GM12878 (cell line): ENCODE measurements at regions of chr10 and their contacts with region 1.

Region 1: GRCh38 chr10:74151056-74151878 is at the start of gene ADK:
- DNase-seq: no peak
- ATAC-seq: peak; percentile 92
- H3K4me3 ChIP-seq: peak within 1 kb of the TSS; percentile 97
- H3K27ac ChIP-seq: peak within 1 kb of the TSS; percentile 99
- H3K4me1 ChIP-seq: peaks cover 11% of the 10 kb centered on the region; the same call in 1 of the 2 replicates
- H3K27me3 ChIP-seq: no peaks in the 10 kb centered on the region
- CTCF ChIP-seq: peak; percentile 20 to 38 (median 29); a peak in 4 of 6 replicates
- EP300 ChIP-seq: no peak
- POLR2A ChIP-seq: peak; percentile 84
- RAD21 ChIP-seq: peak; percentile 21; the same call in 1 of the 2 replicates
- polyA plus RNA-seq, gene ADK: 107 to 117 TPM

Region 2: GRCh38 chr10:74165530-74165901 is 14.2 kb after region 1 on chr10:
- CTCF ChIA-PET with region 1: interaction called, 51 read pairs
- POLR2A ChIA-PET with region 1: interaction called, 44 read pairs
- RAD21 ChIA-PET with region 1: interaction called, 58 read pairs
- SMC1A ChIA-PET with region 1: interaction called, 78 read pairs
- in situ Hi-C with region 1: no loop called
- intact Hi-C with region 1: no loop called
- DNase-seq: no peak
- ATAC-seq: peak; percentile 26
- H3K4me3 ChIP-seq: 0 out of 2 replicates have a peak overlapping the region, but pooled peaks have one; percentile 7
- H3K27ac ChIP-seq: peak overlapping the region; percentile 66; the same call in 1 of the 2 replicates
- H3K4me1 ChIP-seq: peaks cover 53% of the 10 kb centered on the region
- H3K27me3 ChIP-seq: no peaks in the 10 kb centered on the region
- CTCF ChIP-seq: no peak
- EP300 ChIP-seq: no peak
- POLR2A ChIP-seq: no peak
- RAD21 ChIP-seq: no peak

Region 3: DNA sequence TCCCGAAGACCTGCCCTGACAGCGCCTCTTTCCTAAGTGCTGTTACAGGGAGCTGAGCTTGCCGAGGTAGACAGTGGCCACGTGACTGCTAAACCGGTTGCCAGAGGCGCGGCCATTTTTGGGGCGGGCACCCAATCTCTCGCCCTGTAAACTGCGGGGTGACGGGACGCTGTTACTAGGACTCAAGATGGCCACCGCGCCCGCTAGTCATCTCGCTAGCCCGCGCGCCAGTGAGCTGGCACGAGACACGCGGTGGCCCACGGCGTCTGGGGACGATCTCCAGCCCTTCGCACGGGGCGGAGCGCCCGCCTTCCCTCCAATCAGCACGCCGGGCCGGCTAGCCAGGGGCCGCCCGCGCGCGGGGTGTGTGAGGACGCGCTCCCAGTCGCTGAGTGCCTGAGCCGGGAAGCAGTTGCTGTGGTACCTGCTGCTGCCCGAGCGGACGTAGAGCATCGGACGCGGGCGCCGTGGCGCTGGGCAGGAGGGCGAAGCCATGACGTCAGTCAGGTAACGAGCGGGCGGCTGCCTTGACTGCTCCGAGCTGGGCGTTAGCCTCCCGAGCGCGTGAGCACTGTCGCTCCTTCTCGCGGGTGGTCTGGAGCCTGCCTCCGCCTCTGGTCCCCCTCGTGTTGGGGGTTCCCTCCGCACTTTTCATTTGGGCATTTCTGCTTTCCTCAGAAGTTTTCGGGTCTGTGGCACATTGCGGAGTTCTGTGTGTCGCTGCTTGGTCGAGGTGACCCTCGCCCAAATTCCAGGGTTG is 25.3 kb after region 1 on chr10:
- CTCF ChIA-PET with region 1: interaction called, 4 read pairs
- POLR2A ChIA-PET with region 1: interaction called, 12 read pairs
- RAD21 ChIA-PET with region 1: interaction called, 3 read pairs
- SMC1A ChIA-PET with region 1: interaction called, 12 read pairs
- in situ Hi-C with region 1: no loop called
- intact Hi-C with region 1: no loop called
- DNase-seq: peak; percentile 84
- ATAC-seq: peak; percentile 95
- H3K4me3 ChIP-seq: peak overlapping the region; percentile 88
- H3K27ac ChIP-seq: peak overlapping the region; percentile 74
- H3K4me1 ChIP-seq: peaks cover 22% of the 10 kb centered on the region
- H3K27me3 ChIP-seq: no peaks in the 10 kb centered on the region
- CTCF ChIP-seq: no peak
- EP300 ChIP-seq: peak in 1 of 2 experiments; percentile 22; a peak in 2 of 4 replicates
- POLR2A ChIP-seq: peak; percentile 96
- RAD21 ChIP-seq: no peak

Region 4: DNA sequence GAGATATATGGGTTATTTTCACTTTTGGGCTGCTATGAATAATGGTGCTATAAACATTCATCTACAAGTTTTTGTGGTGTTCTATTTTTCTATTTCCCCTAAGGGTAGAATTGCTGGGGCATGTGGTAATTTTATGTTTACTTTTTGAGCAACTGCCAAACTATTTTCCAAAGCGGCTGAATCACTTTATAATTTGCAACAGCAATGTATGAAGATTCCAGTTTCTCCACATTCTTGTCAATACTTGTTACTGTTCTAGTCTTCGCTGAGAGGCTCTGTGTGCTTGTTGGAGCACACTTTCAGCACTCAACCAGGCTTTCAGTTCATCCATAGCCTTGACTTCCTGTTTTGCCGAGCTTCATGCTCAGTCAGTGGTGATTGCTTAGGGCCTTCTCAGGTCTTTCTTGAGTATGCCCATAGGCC is 38.7 kb after region 1 on chr10:
- CTCF ChIA-PET with region 1: interaction called, 9 read pairs
- POLR2A ChIA-PET with region 1: interaction called, 12 read pairs
- RAD21 ChIA-PET with region 1: interaction called, 12 read pairs
- SMC1A ChIA-PET with region 1: interaction called, 16 read pairs
- in situ Hi-C with region 1: no loop called
- intact Hi-C with region 1: no loop called
- DNase-seq: peak; percentile 49
- ATAC-seq: peak; percentile 94
- H3K4me3 ChIP-seq: peak overlapping the region; percentile 64
- H3K27ac ChIP-seq: peak overlapping the region; percentile 76
- H3K4me1 ChIP-seq: no peaks in the 10 kb centered on the region; the same call in 1 of the 2 replicates
- H3K27me3 ChIP-seq: no peaks in the 10 kb centered on the region
- CTCF ChIP-seq: no peak
- EP300 ChIP-seq: no peak
- POLR2A ChIP-seq: peak; percentile 44; the same call in 1 of the 2 replicates
- RAD21 ChIP-seq: no peak

Region 5: GRCh38 chr10:74206746-74207145 is 55.5 kb after region 1 on chr10:
- CTCF ChIA-PET with region 1: interaction called, 29 read pairs
- POLR2A ChIA-PET with region 1: interaction called, 11 read pairs
- RAD21 ChIA-PET with region 1: interaction called, 7 read pairs
- SMC1A ChIA-PET with region 1: interaction called, 39 read pairs
- in situ Hi-C with region 1: no loop called
- intact Hi-C with region 1: no loop called
- DNase-seq: no peak
- ATAC-seq: no peak
- H3K4me3 ChIP-seq: no peak overlapping the region
- H3K27ac ChIP-seq: no peak overlapping the region
- H3K4me1 ChIP-seq: no peaks in the 10 kb centered on the region
- H3K27me3 ChIP-seq: no peaks in the 10 kb centered on the region
- CTCF ChIP-seq: no peak
- EP300 ChIP-seq: no peak
- POLR2A ChIP-seq: no peak
- RAD21 ChIP-seq: no peak

Region 6: DNA sequence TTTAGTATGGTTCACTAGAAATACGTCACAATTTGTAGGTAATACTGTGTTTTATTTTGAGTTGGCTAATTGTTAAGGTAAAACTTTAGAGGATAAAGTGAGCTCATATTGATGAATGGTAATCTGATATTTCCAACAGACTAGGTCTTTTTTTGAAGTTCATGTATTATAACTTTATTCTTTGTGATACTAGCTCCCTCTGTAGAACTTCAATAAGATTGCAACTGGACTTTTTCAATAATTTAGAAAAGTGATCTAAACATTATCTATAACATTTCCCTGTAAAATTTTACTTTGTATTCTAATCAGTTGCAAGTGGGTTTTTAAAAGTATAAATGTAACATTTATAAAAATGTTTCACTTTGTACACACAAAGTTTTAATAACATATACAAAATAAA is 83.3 kb after region 1 on chr10:
- CTCF ChIA-PET with region 1: interaction called, 16 read pairs
- POLR2A ChIA-PET with region 1: interaction called, 3 read pairs
- RAD21 ChIA-PET with region 1: interaction called, 5 read pairs
- SMC1A ChIA-PET with region 1: interaction called, 6 read pairs
- in situ Hi-C with region 1: no loop called
- intact Hi-C with region 1: no loop called
- DNase-seq: no peak
- ATAC-seq: no peak; the same call in 2 of the 3 replicates
- H3K4me3 ChIP-seq: no peak overlapping the region
- H3K27ac ChIP-seq: no peak overlapping the region
- H3K4me1 ChIP-seq: no peaks in the 10 kb centered on the region
- H3K27me3 ChIP-seq: no peaks in the 10 kb centered on the region
- CTCF ChIP-seq: peak in 2 of 3 experiments; percentile 35 to 43; a peak in 2 of 6 replicates
- EP300 ChIP-seq: no peak
- POLR2A ChIP-seq: no peak
- RAD21 ChIP-seq: peak; percentile 39